Ovary (tissue), 10 donors: ENCODE measurements at regions of chr10 and their contacts with region 1.

Region 1: DNA sequence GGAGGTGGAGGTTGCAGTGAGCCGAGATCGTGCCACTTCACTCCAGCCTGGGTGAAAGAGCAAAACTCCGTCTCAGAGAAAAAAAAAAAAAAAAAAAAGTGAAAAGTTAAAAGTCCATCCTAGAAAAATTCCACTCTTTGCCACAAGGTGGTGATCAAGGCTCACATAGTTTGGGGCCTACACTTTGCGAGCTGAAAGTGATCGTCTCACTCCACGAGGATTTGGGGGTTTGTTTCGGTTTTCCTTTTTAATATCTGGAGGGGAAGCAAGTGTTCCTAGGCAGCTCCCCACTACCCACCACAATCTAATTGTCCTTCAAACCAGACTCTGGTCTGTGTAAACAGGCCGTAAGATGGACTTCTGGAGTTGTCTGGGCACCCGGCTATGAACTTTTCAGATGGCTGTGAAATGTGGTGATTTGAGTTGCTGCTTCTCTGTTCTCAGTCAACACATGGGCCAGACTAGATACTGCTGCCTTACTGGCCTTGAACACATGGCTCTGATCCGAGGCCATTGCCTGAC is 27.1 kb downstream of the PRLHR start:
- DNase-seq: peak in 4 of 5 donors; percentile 28 to 64 (median 42)
- H3K4me3 ChIP-seq: no peak overlapping the region
- H3K27ac ChIP-seq: no peak overlapping the region
- H3K4me1 ChIP-seq: peaks cover 8% of the 10 kb centered on the region
- H3K27me3 ChIP-seq: no peaks in the 10 kb centered on the region
- CTCF ChIP-seq: peak; percentile 61 to 84 (median 70)
- EP300 ChIP-seq: no peak
- POLR2A ChIP-seq: no peak

Region 2: GRCh38 chr10:118459726-118460193 is 108.6 kb before region 1 on chr10:
- intact Hi-C with region 1: no loop called
- DNase-seq: peak; percentile 13 to 57 (median 52)
- H3K4me3 ChIP-seq: no peak overlapping the region
- H3K27ac ChIP-seq: no peak overlapping the region
- H3K4me1 ChIP-seq: no peaks in the 10 kb centered on the region
- H3K27me3 ChIP-seq: no peaks in the 10 kb centered on the region
- CTCF ChIP-seq: peak in 2 of 3 donors; percentile 29 to 56
- EP300 ChIP-seq: no peak
- POLR2A ChIP-seq: no peak

Region 3: DNA sequence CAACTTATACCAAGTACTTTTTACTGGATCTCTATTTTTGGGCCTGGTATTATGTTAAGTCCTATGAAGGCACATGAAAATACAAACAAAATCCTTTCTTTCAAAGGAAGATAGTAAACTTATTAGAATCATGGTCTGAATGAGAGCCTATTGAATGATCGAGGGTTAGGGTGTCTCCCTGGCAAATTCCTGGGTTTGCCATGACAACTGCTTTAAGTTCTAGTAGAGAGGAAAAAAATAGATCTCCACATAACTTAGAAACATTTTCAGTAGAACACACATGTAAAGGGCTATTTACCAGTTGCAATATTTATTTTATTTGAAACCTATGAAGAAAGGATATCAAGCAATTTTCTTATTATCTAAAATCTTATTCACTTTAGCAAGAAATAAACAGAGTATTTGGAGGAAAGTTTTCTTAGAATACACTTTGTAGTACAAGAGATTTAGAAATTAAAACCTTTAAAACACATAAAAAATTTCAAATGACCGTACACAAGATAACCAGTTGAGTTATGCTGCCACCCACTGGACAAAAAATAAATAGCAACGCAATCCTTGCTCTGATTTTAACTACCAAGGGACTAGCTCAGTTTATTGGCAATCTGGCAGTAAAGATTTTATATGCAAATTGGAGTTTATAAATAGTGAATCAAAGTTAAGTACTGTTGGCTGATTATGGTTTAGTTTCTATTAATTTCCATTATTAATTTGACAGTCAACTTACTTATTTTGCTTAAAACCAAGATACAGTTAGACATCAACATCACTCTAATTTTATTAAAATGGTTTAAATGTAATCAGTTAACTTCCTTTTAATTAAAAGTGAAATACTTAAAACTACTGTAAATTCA is 152.5 kb after region 1 on chr10:
- intact Hi-C with region 1: loop called (anchors 2 to 10 kb)
- DNase-seq: peak in 2 of 5 donors; percentile 36 to 64
- H3K4me3 ChIP-seq: no peak overlapping the region
- H3K27ac ChIP-seq: no peak overlapping the region
- H3K4me1 ChIP-seq: peaks cover 2% of the 10 kb centered on the region
- H3K27me3 ChIP-seq: no peaks in the 10 kb centered on the region
- CTCF ChIP-seq: peak; percentile 65 to 69 (median 67)
- EP300 ChIP-seq: no peak
- POLR2A ChIP-seq: no peak

Region 4: DNA sequence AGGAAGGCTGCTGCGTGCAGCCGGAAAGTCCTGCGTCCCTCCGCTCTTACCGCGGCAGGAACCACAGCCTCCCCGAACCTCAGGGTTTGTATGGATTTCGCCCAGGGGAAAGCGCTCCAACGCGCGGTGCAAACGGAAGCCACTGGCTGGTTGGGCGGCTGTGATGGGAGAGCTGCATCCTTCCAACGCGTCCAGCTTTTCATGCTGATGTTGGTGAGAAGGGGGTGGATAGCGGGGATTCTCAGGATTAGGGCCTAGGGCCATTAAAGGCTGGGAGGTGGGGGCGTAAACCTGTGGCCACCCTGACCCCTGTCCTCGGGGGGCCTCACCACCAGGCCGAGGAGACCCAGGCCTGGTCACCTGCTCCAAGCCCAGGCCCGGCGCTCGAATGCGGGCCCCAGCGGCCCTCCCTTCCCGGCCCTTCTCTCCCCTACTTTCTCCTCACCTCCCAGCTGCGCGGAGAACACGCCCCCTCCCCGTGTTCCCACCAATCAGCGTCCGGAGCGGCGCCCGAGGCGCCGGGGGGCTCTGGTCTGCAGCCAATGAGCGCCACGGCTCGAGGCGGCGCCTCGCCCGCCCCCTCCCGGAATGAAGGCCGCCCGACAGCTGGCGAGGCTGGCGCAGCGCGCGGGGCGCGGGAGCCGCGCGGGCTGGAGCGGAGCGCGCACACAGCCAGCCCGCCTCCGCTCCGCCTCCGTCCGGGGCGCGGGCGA is 460.7 kb after region 1 on chr10:
- intact Hi-C with region 1: loop called in 1 of 4 experiments (anchors 5 kb)
- DNase-seq: peak; percentile 78 to 90 (median 87)
- H3K4me3 ChIP-seq: peak overlapping the region; percentile 52
- H3K27ac ChIP-seq: no peak overlapping the region
- H3K4me1 ChIP-seq: peaks cover 4% of the 10 kb centered on the region
- H3K27me3 ChIP-seq: no peaks in the 10 kb centered on the region
- CTCF ChIP-seq: peak in 2 of 3 donors; percentile 9 to 10
- EP300 ChIP-seq: no peak
- POLR2A ChIP-seq: no peak